Pancreas (tissue), 10 donors: ENCODE measurements at regions of chr1 and their contacts with region 1.

Region 1: GRCh38 chr1:157985473-157985872 is 8.0 kb upstream of the KIRREL1 start:
- DNase-seq: no peak
- ATAC-seq: no peak
- H3K4me3 ChIP-seq: no peak overlapping the region
- H3K27ac ChIP-seq: no peak overlapping the region
- H3K4me1 ChIP-seq: no peaks in the 10 kb centered on the region
- H3K27me3 ChIP-seq: no peaks in the 10 kb centered on the region
- CTCF ChIP-seq: no peak

Region 2: DNA sequence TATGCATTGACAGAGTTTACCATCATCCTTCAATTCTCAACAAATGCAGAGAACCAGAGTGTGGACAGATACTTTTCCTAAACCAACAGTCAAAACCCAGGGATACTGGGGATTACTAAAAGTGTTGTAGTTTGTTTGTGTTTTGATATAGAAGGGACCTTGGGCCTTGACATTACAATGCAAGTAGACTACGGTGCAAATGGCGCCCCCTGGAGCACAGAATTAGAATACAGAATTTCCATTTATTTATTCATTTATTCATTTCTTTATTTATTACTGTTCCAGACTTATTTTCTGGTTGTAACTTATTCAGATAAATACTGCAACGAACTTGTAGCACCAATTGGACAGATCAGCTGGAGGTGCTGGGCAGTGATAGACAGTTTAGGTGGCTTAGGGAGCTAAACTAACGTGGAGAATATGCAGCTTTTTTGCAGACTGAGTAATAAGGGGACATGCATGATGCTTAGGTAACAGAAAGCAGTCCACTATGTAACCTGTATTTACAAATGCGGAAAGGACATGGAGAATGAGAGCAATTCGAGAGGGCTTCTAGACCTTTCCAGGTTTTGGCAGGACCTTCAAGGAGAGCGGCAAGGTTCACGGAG is 50.6 kb after region 1 on chr1:
- intact Hi-C with region 1: loop called in 1 of 3 experiments (anchors 5 kb)
- DNase-seq: peak in 1 of 6 donors; percentile 28
- ATAC-seq: peak in 3 of 4 donors; percentile 43 to 69 (median 47)
- H3K4me3 ChIP-seq: no peak overlapping the region
- H3K27ac ChIP-seq: no peak overlapping the region
- H3K4me1 ChIP-seq: no peaks in the 10 kb centered on the region
- H3K27me3 ChIP-seq: no peaks in the 10 kb centered on the region
- CTCF ChIP-seq: peak; percentile 16 to 58 (median 42)